GM18951 (cell line): ENCODE measurements at regions of chr6 and their contacts with region 1.

Region 1: GRCh38 chr6:26629359-26629758 is 30.2 kb downstream of the ZNF322 start:
- POLR2A ChIP-seq: no peak

Region 2: DNA sequence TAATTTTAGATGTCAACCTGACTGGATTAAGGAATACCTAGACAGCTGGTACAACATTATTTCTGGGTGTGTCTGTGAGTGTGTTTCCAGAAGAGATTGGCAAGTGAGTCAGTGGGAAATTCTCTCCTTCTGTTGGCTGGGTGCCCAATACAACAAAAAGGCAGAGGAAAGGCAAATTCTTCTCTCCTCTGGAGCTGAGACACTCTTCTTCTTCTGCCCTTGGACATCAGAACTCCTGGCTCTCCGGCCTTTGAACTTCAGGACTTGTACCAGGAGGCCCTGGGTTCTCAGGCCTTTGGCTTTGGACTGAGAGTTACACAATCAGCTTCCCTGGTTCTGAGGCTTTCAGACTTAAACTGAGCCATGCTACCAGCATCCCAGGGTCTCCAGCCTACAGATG is 235.1 kb before region 1 on chr6:
- in situ Hi-C with region 1: no loop called
- POLR2A ChIP-seq: no peak

Region 3: GRCh38 chr6:26754212-26754611 is 124.9 kb after region 1 on chr6:
- in situ Hi-C with region 1: no loop called
- POLR2A ChIP-seq: no peak

Region 4: GRCh38 chr6:27081931-27082330 is 452.6 kb after region 1 on chr6:
- in situ Hi-C with region 1: loop called (anchors 10 kb)
- POLR2A ChIP-seq: no peak